ENCODE measurements at regions of chr4 and their contacts with region 1.

Region 1: GRCh38 chr4:27048429-27049238 is 188.0 kb downstream of the STIM2 start:
- DNase-seq: peak; percentile 56
- H3K4me3 ChIP-seq: peak overlapping the region; percentile 44
- H3K27ac ChIP-seq: no peak overlapping the region
- H3K4me1 ChIP-seq: peaks cover 6% of the 10 kb centered on the region
- CTCF ChIP-seq: peak; percentile 97

Region 2: GRCh38 chr4:27115221-27115620 is 66.6 kb after region 1 on chr4:
- CTCF ChIA-PET with region 1: no interaction called
- POLR2A ChIA-PET with region 1: no interaction called
- intact Hi-C with region 1: no loop called
- DNase-seq: no peak
- H3K4me3 ChIP-seq: no peak overlapping the region
- H3K27ac ChIP-seq: no peak overlapping the region
- H3K4me1 ChIP-seq: no peaks in the 10 kb centered on the region
- CTCF ChIP-seq: no peak

Region 3: GRCh38 chr4:27318743-27319142 is 270.1 kb after region 1 on chr4:
- CTCF ChIA-PET with region 1: no interaction called
- POLR2A ChIA-PET with region 1: no interaction called
- intact Hi-C with region 1: loop called (anchors 2 kb)
- DNase-seq: peak; percentile 43
- H3K4me3 ChIP-seq: no peak overlapping the region
- H3K27ac ChIP-seq: no peak overlapping the region
- H3K4me1 ChIP-seq: no peaks in the 10 kb centered on the region
- CTCF ChIP-seq: peak; percentile 66

Region 4: GRCh38 chr4:27692158-27692557 is 643.5 kb after region 1 on chr4:
- CTCF ChIA-PET with region 1: no interaction called
- POLR2A ChIA-PET with region 1: no interaction called
- intact Hi-C with region 1: loop called (anchors 5 kb)
- DNase-seq: peak; percentile 46
- H3K4me3 ChIP-seq: no peak overlapping the region
- H3K27ac ChIP-seq: no peak overlapping the region
- H3K4me1 ChIP-seq: no peaks in the 10 kb centered on the region
- CTCF ChIP-seq: peak; percentile 84

Measured in OCI-LY7 (cell line).